HEK293 (cell line): ENCODE measurements at regions of chr20 and their contacts with region 1.

Region 1: GRCh38 chr20:36399147-36399968 is 93.2 kb downstream of the DLGAP4 start:
- H3K4me3 ChIP-seq: no peak overlapping the region
- H3K27ac ChIP-seq: no peak overlapping the region
- H3K4me1 ChIP-seq: no peaks in the 10 kb centered on the region
- CTCF ChIP-seq: no peak

Region 2: GRCh38 chr20:36214684-36215256 is 184.6 kb before region 1 on chr20:
- CTCF ChIA-PET with region 1: interaction called, 11 read pairs
- POLR2A ChIA-PET with region 1: no interaction called
- H3K4me3 ChIP-seq: no peak overlapping the region
- H3K27ac ChIP-seq: no peak overlapping the region
- H3K4me1 ChIP-seq: no peaks in the 10 kb centered on the region
- CTCF ChIP-seq: peak; percentile 40

Region 3: DNA sequence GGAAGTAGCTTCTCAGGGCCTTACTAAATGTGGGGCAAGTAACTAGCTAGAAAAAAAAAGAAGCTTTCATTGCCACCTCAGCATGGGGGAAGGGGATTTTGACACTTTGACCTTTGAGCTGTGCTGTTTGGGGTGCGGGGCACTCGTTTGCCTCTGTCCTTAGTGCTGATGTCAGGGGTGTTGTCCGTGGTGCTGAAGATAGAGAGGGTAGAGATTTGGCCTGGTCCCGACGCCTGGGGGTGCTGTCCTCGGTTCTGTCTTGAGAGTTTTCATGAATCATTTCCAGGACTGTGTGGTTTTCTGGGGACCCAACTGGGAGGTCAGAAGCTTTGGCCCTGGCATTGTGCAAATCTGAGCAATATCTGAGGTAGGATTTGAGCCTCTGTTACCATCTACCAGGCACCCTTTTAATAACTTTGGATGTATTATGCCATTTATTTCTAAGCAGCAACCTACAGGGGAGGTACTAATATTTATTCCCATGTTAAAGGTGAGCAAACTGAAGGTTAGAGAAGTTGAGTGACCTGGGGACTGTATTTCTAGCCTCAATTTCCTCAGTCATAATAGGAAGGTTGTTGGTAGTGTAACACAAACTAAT is 15.2 kb before region 1 on chr20:
- CTCF ChIA-PET with region 1: interaction called, 14 read pairs
- POLR2A ChIA-PET with region 1: no interaction called
- H3K4me3 ChIP-seq: no peak overlapping the region
- H3K27ac ChIP-seq: no peak overlapping the region
- H3K4me1 ChIP-seq: no peaks in the 10 kb centered on the region
- CTCF ChIP-seq: 0 out of 2 replicates have a peak, but pooled peaks have one; percentile 38

Region 4: GRCh38 chr20:36501367-36502006 is 102.1 kb after region 1 on chr20:
- CTCF ChIA-PET with region 1: no interaction called
- POLR2A ChIA-PET with region 1: no interaction called
- H3K4me3 ChIP-seq: no peak overlapping the region
- H3K27ac ChIP-seq: no peak overlapping the region
- H3K4me1 ChIP-seq: no peaks in the 10 kb centered on the region
- CTCF ChIP-seq: no peak

Region 5: GRCh38 chr20:36709126-36709525 is 309.8 kb after region 1 on chr20:
- CTCF ChIA-PET with region 1: no interaction called
- POLR2A ChIA-PET with region 1: no interaction called
- H3K4me3 ChIP-seq: no peak overlapping the region
- H3K27ac ChIP-seq: no peak overlapping the region
- H3K4me1 ChIP-seq: no peaks in the 10 kb centered on the region
- CTCF ChIP-seq: no peak